ENCODE measurements at regions of chr9 and their contacts with region 1.

Region 1: GRCh38 chr9:132973713-132974112 is 4.8 kb upstream of the GFI1B start:
- DNase-seq: no peak
- ATAC-seq: no peak

Region 2: DNA sequence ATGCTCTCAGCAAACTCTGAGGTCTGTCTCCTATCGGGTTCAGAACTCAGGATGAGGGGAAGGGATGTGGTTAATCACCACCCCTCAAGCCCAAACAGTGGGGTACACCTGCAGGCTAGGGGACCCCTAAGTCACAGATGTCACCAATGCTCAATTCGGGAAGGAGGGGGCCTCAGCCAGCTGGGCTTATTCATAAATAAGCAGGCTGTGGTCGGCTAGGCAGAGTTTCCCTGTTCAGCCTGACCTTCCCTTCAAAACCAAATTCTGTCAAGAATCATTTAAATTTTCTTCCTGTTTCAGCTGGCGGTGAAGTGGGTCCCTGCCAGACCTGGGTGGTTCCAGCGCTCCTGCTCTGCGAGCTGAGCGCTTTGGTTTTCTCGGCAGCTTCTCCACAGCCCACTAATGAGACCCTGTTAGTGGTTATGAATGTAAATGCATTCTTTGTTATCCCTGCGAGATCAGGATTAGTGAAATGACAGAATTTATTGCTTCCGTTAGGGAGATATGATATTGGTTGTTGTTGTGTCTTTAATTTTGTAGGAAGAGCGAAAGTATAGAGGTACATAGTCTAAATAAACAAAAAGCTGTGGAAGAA is 163.9 kb before region 1 on chr9:
- intact Hi-C with region 1: loop called (anchors 10 kb)
- DNase-seq: no peak
- ATAC-seq: no peak

Region 3: GRCh38 chr9:133089271-133089671 is 115.6 kb after region 1 on chr9:
- intact Hi-C with region 1: no loop called
- DNase-seq: no peak
- ATAC-seq: peak; percentile 51